Uterus (tissue), 4 donors: ENCODE measurements at regions of chr19 and their contacts with region 1.

Region 1: DNA sequence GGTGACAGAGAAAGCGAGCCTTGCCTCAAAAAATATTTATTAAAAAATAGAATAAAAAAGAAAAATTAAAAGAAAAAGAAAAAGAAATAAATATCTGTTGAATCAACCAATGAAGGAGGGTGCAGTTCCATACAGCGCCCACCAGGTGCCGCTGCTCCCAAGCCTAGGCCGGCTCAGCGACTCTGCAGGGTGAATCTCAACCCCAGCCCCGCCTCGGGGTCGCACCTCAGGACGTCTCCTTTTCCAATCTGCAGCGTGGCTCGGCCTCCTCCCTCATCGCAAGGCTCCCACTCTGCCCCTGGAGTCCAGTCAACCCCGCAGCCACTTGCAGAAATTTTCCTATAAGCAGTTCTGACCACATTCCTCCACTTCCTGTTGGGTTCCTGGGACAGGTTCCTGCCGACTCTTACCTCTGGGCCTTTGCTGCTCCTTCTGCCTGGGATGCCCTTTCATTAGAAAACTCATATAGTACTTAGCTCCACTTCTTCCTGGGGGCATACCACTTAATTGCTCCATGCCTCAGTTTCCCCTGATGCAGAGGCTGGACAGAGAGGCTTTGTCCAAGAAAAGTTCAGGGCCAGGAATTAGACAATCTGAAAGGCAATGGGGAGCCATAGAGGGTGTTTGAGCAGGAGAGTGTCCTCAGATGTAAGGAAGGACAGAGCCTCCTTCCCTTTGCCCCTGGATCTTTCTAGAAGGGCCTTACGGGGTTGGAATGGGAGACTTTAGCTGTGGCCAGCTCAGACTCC is 24.3 kb downstream of the NFILZ start:
- DNase-seq: peak; percentile 21 to 38
- H3K4me3 ChIP-seq: no peak overlapping the region
- H3K27ac ChIP-seq: no peak overlapping the region
- H3K4me1 ChIP-seq: no peaks in the 10 kb centered on the region
- H3K27me3 ChIP-seq: no peaks in the 10 kb centered on the region
- CTCF ChIP-seq: peak; percentile 72 to 99 (median 87)
- POLR2A ChIP-seq: no peak

Region 2: GRCh38 chr19:9075064-9075949 is 420.5 kb after region 1 on chr19:
- intact Hi-C with region 1: loop called (anchors 5 kb)
- DNase-seq: peak; percentile 89 to 96
- H3K4me3 ChIP-seq: no peak overlapping the region
- H3K27ac ChIP-seq: peak overlapping the region; percentile 74 to 81
- H3K4me1 ChIP-seq: peaks cover 0 to 6% of the 10 kb centered on the region in 2 donors
- H3K27me3 ChIP-seq: no peaks in the 10 kb centered on the region
- CTCF ChIP-seq: no peak
- POLR2A ChIP-seq: no peak